Activated naive CD8-positive, alpha-beta T cell treated with anti-CD3 and anti-CD28 coated beads, Interleukin-2, amount 10 ng/mL, durations not matched to agents 7 days and 5 days (primary cell): ENCODE measurements at regions of chr7 and their contacts with region 1.

Region 1: GRCh38 chr7:33040803-33041516 is 21.6 kb downstream of the NT5C3A start:
- DNase-seq: no peak
- ATAC-seq: peak; percentile 99
- H3K4me3 Mint-ChIP-seq: peak overlapping the region; percentile 87
- H3K27ac Mint-ChIP-seq: peak overlapping the region; percentile 72
- H3K4me1 Mint-ChIP-seq: peaks cover 28% of the 10 kb centered on the region
- H3K27me3 Mint-ChIP-seq: no peaks in the 10 kb centered on the region

Region 2: GRCh38 chr7:32436146-32436928 is 604.6 kb before region 1 on chr7:
- POLR2A ChIA-PET with region 1: no interaction called
- DNase-seq: no peak
- ATAC-seq: no peak
- H3K4me3 Mint-ChIP-seq: no peak overlapping the region
- H3K27ac Mint-ChIP-seq: no peak overlapping the region
- H3K4me1 Mint-ChIP-seq: no peaks in the 10 kb centered on the region
- H3K27me3 Mint-ChIP-seq: peaks cover 2% of the 10 kb centered on the region

Region 3: GRCh38 chr7:32905175-32905662 is 135.7 kb before region 1 on chr7:
- POLR2A ChIA-PET with region 1: interaction called, 10 read pairs
- DNase-seq: peak; percentile 67
- ATAC-seq: peak; percentile 93
- H3K4me3 Mint-ChIP-seq: peak overlapping the region; percentile 85
- H3K27ac Mint-ChIP-seq: peak overlapping the region; percentile 96
- H3K4me1 Mint-ChIP-seq: peaks cover 9% of the 10 kb centered on the region
- H3K27me3 Mint-ChIP-seq: no peaks in the 10 kb centered on the region

Region 4: GRCh38 chr7:33054261-33054964 is 13.5 kb after region 1 on chr7:
- POLR2A ChIA-PET with region 1: interaction called, 16 read pairs
- DNase-seq: no peak
- ATAC-seq: peak; percentile 84
- H3K4me3 Mint-ChIP-seq: no peak overlapping the region
- H3K27ac Mint-ChIP-seq: peak overlapping the region; percentile 25
- H3K4me1 Mint-ChIP-seq: peaks cover 34% of the 10 kb centered on the region
- H3K27me3 Mint-ChIP-seq: no peaks in the 10 kb centered on the region

Region 5: GRCh38 chr7:33062782-33063443 is 22.0 kb after region 1 on chr7:
- POLR2A ChIA-PET with region 1: interaction called, 16 read pairs
- DNase-seq: peak; percentile 95
- ATAC-seq: peak; percentile 96
- H3K4me3 Mint-ChIP-seq: peak overlapping the region; percentile 95
- H3K27ac Mint-ChIP-seq: peak overlapping the region; percentile 95
- H3K4me1 Mint-ChIP-seq: peaks cover 24% of the 10 kb centered on the region
- H3K27me3 Mint-ChIP-seq: peaks cover 10% of the 10 kb centered on the region